HepG2 (cell line): ENCODE measurements at regions of chr2 and their contacts with region 1.

Region 1: DNA sequence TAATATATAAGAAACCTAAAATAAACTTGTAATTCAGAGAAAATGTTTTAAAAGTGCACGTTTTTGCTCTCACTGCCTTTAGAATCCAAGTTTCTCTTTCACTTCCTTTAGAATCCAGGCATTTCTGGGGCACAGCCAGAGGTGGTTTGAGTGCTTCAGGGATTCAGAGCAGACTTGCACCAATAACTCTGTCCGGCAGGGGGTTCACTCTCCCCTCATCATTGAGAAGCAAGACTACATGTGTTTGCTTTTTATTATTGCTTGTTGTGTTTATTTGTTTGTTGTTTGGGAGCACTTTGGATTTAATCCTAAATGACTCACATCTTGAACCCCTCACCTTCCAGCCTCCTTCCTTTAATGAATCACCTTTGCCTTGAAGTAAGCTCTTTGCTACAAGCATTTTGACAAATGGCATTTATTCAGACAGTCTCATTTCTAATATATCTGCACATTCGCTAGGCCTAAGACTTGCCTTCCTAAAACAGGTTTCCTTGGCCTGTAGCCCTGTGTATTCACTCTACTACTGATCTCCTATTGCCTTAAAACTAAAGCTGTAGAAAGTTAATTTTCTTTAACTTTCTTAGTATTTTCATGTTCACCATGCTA is 233.5 kb upstream of the ATP5MC3 start:
- DNase-seq: peak; percentile 55
- ATAC-seq: peak; percentile 97
- H3K4me3 ChIP-seq: no peak overlapping the region
- H3K27ac ChIP-seq: no peak overlapping the region
- H3K4me1 ChIP-seq: no peaks in the 10 kb centered on the region
- H3K27me3 ChIP-seq: no peaks in the 10 kb centered on the region; a peak in 1 of 5 replicates
- CTCF ChIP-seq: peak; percentile 84
- EP300 ChIP-seq: no peak
- POLR2A ChIP-seq: no peak
- RAD21 ChIP-seq: 0 out of 2 replicates have a peak, but pooled peaks have one; percentile 44

Region 2: DNA sequence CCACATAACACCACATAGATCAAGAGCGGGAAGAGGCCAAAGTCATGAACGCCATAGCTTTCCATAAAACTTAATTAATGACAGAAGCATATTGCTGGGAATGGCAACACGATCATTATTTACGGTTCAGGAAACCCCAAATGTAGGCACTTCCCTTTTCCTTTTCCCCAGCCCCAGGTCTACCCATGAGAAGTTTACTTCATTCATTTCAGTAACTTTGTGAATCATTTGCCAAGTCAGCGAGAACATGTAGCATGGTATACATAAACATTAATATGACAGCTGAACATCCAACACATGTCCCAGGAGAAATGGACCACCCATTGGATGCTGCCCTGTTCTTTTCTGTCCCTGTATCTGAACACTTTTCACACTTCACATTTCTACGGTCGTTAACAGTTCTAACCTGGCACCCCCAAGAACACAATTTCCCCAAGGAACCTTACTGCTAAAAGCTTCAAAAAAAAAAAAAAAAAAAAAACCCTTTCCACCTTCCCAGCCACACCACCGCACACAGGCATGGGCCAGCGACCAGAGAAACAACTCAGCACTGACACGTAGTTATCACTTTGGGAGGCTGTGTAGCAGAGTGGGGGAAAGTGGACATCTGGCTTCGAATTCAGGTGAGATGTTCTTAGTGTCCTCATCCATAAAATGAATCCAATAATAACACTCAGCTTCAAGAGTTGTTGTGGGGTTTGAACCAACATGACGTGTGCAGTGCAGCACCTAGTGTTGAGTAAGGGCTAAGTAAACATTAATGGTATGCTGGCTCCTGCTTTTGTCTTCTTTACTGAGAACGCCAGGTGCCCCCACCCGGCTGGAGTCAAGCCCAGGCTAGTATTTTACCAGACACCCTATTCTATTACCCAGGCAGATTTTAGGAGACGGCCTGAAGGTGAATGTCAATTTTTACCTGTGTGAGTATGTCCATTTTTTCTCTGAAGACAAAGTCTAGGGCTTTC is 215.6 kb after region 1 on chr2:
- CTCF ChIA-PET with region 1: interaction called, 6 read pairs
- POLR2A ChIA-PET with region 1: no interaction called
- in situ Hi-C with region 1: no loop called
- intact Hi-C with region 1: loop called (anchors 1 kb)
- DNase-seq: peak; percentile 81
- ATAC-seq: peak; percentile 96
- H3K4me3 ChIP-seq: no peak overlapping the region
- H3K27ac ChIP-seq: no peak overlapping the region
- H3K4me1 ChIP-seq: peaks cover 41% of the 10 kb centered on the region
- H3K27me3 ChIP-seq: no peaks in the 10 kb centered on the region
- CTCF ChIP-seq: peak; percentile 83
- EP300 ChIP-seq: 0 out of 4 replicates have a peak, but pooled peaks of 1 of the 2 experiments have one; percentile 3
- POLR2A ChIP-seq: no peak
- RAD21 ChIP-seq: peak; percentile 53; the same call in 1 of the 2 replicates

Region 3: DNA sequence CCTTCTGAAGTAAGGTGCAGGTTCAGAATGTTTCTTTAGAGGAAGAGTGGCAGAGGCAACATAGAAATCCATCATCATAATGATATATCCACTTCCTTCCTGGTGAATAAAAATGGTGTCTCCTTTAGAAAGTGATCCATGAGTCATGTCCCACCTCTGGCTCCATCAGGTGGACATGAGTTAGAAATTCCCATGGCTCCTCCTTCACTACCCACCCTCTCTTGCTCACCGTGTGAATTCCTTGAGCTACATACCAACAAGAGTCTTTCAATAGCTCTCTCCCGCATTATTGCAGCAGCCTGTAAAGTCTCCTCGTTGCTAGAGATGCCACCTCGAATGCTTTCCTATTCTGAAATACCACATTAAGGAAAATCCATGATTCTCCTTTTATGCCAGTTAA is 269.5 kb after region 1 on chr2:
- CTCF ChIA-PET with region 1: no interaction called
- POLR2A ChIA-PET with region 1: no interaction called
- in situ Hi-C with region 1: no loop called
- intact Hi-C with region 1: loop called (anchors 5 kb)
- DNase-seq: peak; percentile 12
- ATAC-seq: 0 out of 3 replicates have a peak, but pooled peaks have one; percentile 32
- H3K4me3 ChIP-seq: no peak overlapping the region
- H3K27ac ChIP-seq: no peak overlapping the region
- H3K4me1 ChIP-seq: no peaks in the 10 kb centered on the region
- H3K27me3 ChIP-seq: no peaks in the 10 kb centered on the region
- CTCF ChIP-seq: peak; percentile 20; the same call in 1 of the 2 replicates
- EP300 ChIP-seq: no peak
- POLR2A ChIP-seq: no peak
- RAD21 ChIP-seq: no peak

Region 4: GRCh38 chr2:176088048-176088936 is 673.3 kb after region 1 on chr2:
- CTCF ChIA-PET with region 1: interaction called, 7 read pairs
- POLR2A ChIA-PET with region 1: no interaction called
- in situ Hi-C with region 1: no loop called
- intact Hi-C with region 1: loop called (anchors 2 kb)
- DNase-seq: peak; percentile 40
- ATAC-seq: peak; percentile 92
- H3K4me3 ChIP-seq: peak overlapping the region; percentile 36 to 75 (median 51); a peak in 5 of 6 replicates
- H3K27ac ChIP-seq: no peak overlapping the region
- H3K4me1 ChIP-seq: peaks cover 25% of the 10 kb centered on the region
- H3K27me3 ChIP-seq: peaks cover 19 to 94% of the 10 kb centered on the region in 2 experiments
- CTCF ChIP-seq: peak; percentile 96
- EP300 ChIP-seq: no peak
- POLR2A ChIP-seq: no peak
- RAD21 ChIP-seq: peak; percentile 87